Activated CD8-positive, alpha-beta memory T cell treated with anti-CD3 and anti-CD28 coated beads, Interleukin-2, amount 10 ng/mL, durations not matched to agents 7 days and 5 days (primary cell): ENCODE measurements at regions of chr6 and their contacts with region 1.

Region 1: GRCh38 chr6:56902641-56903464 is 52.1 kb upstream of the BEND6 start:
- DNase-seq: no peak
- ATAC-seq: peak; percentile 39
- H3K4me3 Mint-ChIP-seq: no peak overlapping the region
- H3K27ac Mint-ChIP-seq: no peak overlapping the region
- H3K4me1 Mint-ChIP-seq: no peaks in the 10 kb centered on the region
- H3K27me3 Mint-ChIP-seq: peaks cover 34% of the 10 kb centered on the region

Region 2: DNA sequence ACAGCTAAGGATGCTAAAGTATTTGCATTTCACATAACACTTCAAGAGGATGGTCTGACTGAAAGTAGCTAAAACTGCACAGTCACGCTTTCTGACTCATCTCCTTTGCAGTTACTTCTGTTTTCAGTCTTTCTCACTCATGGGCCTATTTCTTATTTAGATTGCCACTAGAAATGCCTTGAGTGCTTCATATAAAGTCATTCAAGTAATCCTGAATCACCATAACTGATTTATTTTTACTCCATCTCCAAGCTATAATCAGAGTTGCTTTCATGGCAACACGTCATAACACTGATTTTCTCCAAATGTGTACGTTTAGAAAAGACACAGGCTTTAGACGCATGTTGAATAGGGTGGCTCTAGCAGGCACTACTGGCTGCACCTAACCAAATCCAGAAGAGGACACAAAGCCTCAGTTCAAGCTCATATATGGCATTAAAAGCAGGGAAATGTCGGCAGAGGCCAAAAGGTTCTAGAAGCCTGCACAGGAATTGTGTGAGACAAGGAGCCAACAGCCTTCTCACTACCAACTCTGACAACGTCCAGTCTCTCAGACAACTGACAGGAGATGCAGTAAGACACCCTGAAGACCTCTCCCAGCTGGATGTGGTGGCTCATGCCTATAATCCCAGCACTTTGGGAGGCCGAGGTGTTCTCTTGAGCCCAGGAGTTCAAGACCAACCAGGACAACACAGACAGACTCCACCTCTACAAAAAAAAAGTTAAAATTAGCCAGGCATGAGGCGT is 12.0 kb before region 1 on chr6:
- CTCF ChIA-PET with region 1: interaction called, 10 read pairs
- DNase-seq: peak; percentile 52
- ATAC-seq: peak; percentile 87
- H3K4me3 Mint-ChIP-seq: no peak overlapping the region
- H3K27ac Mint-ChIP-seq: peak overlapping the region; percentile 71
- H3K4me1 Mint-ChIP-seq: peaks cover 28% of the 10 kb centered on the region
- H3K27me3 Mint-ChIP-seq: peaks cover 11% of the 10 kb centered on the region

Region 3: GRCh38 chr6:56959938-56960337 is 57.1 kb after region 1 on chr6:
- CTCF ChIA-PET with region 1: interaction called, 25 read pairs
- DNase-seq: no peak
- ATAC-seq: no peak
- H3K4me3 Mint-ChIP-seq: no peak overlapping the region
- H3K27ac Mint-ChIP-seq: no peak overlapping the region
- H3K4me1 Mint-ChIP-seq: peaks cover 10% of the 10 kb centered on the region
- H3K27me3 Mint-ChIP-seq: peaks cover 57% of the 10 kb centered on the region

Region 4: GRCh38 chr6:57021086-57021720 is 118.3 kb after region 1 on chr6:
- CTCF ChIA-PET with region 1: interaction called, 11 read pairs
- DNase-seq: no peak
- ATAC-seq: peak; percentile 47
- H3K4me3 Mint-ChIP-seq: no peak overlapping the region
- H3K27ac Mint-ChIP-seq: no peak overlapping the region
- H3K4me1 Mint-ChIP-seq: no peaks in the 10 kb centered on the region
- H3K27me3 Mint-ChIP-seq: peaks cover 39% of the 10 kb centered on the region

Region 5: GRCh38 chr6:57316581-57317059 is 413.8 kb after region 1 on chr6:
- CTCF ChIA-PET with region 1: interaction called, 93 read pairs
- DNase-seq: peak; percentile 90
- ATAC-seq: peak; percentile 85
- H3K4me3 Mint-ChIP-seq: peak overlapping the region; percentile 96
- H3K27ac Mint-ChIP-seq: peak overlapping the region; percentile 96
- H3K4me1 Mint-ChIP-seq: peaks cover 38% of the 10 kb centered on the region
- H3K27me3 Mint-ChIP-seq: peaks cover 15% of the 10 kb centered on the region